Left cardiac atrium (tissue), 4 donors: ENCODE measurements at regions of chr19 and their contacts with region 1.

Region 1: GRCh38 chr19:18349524-18350128 is 9.2 kb downstream of the PGPEP1 start:
- DNase-seq: peak; percentile 55
- ATAC-seq: peak in 1 of 2 donors; percentile 71

Region 2: DNA sequence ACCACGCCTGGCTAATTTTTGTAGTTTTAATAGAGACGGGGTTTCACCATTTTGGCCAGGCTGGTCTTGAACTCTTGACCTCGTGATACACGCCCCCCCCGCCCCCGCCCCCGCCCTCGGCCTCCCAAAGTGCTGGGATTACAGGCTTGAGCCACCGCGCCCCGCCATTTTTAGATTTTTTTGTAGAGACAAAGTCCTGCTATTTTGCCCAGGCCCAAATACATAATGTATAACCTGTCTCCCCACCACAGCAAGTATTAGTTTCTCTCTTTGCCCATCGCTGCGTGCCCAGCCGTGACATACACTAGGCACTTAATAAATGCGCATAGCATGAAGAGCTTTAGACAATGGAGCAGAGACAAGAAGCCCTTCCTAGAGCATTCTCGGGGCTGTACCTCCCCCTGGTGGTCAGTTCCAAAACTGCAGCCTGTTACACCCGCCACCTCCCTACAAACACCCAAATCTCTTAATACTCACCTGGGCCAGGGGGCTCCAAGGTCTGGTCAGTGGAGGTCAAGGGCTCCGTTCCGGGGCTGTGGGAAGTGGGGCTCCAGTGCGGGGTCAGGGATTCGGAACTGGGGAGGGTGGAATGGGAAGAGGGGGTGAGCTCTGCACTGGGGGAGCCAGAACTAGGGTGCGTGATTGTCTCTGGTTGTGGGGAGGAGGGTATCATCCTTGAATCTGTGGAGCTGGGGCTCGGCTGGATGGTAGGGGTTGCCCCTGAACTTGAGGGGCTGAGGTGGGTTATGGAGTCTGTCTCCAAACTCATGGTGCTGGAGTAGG is 97.8 kb before region 1 on chr19:
- intact Hi-C with region 1: no loop called
- DNase-seq: peak; percentile 68
- ATAC-seq: peak; percentile 58 to 76

Region 3: DNA sequence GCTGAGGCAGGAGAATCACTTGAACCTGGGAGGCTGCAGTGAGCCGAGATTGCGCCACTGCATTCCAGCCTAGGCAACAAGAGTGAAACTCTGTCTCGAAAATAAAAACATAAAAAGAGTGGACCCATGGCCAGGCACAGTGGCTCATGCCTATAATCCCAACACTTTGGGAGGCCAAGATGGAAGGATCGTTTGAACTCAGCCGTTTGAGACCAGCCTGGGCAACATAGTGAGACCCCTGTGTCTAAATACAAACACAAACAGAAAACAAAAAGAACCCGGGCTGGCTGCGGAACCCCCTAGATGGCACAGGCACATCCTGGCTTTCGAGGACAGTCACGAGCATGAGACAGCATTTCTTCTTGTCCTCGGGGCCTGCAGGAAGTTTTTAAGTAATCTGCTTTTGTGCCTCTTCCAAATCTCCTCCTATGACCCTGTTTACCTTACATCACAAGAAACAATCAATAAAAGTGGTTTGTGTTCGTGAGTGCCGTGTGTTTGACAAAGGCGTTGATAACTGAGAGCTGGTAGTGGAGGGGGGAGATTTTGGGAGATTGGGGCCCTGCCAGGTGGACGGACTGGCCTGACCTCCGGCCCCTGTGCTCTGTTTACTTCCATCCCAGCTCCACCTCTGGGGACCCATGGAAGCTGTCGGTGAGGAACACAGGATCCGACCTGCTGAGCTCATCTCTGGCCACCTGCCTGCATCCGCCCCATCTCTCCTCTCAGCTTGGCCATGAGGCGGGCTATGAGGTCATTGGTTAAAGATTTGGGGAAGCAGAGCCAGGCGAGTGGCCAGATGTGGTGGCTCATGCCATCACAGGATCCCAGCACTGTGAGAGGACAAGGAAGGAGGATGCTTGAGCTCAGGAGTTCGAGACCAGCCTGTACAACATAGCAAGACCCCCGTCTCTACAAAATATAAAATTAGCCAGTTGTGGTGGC is 30.4 kb after region 1 on chr19:
- intact Hi-C with region 1: no loop called
- DNase-seq: peak; percentile 87
- ATAC-seq: peak; percentile 83 to 89

Region 4: GRCh38 chr19:18392417-18392816 is 42.8 kb after region 1 on chr19:
- intact Hi-C with region 1: loop called in 1 of 2 experiments (anchors 5 kb)
- DNase-seq: peak; percentile 60
- ATAC-seq: peak in 1 of 2 donors; percentile 46

Region 5: GRCh38 chr19:18408053-18408476 is 58.4 kb after region 1 on chr19:
- intact Hi-C with region 1: loop called (anchors 2 to 5 kb)
- DNase-seq: no peak
- ATAC-seq: no peak

Region 6: GRCh38 chr19:18571564-18572300 is 222.1 kb after region 1 on chr19 and contains the start of gene UBA52:
- intact Hi-C with region 1: no loop called
- DNase-seq: peak; percentile 98
- ATAC-seq: peak; percentile 96 to 99
- total RNA-seq, gene UBA52: 696 to 720 TPM